Activated CD8-positive, alpha-beta memory T cell treated with anti-CD3 and anti-CD28 coated beads, Interleukin-2, amount 10 ng/mL, durations not matched to agents 7 days and 5 days (primary cell): ENCODE measurements at regions of chr17 and their contacts with region 1.

Region 1: GRCh38 chr17:17641621-17642409 is 39.4 kb upstream of the RAI1 start:
- DNase-seq: peak; percentile 82
- ATAC-seq: peak; percentile 96
- H3K4me3 Mint-ChIP-seq: no peak overlapping the region
- H3K27ac Mint-ChIP-seq: no peak overlapping the region
- H3K4me1 Mint-ChIP-seq: peaks cover 2% of the 10 kb centered on the region
- H3K27me3 Mint-ChIP-seq: peaks cover 6% of the 10 kb centered on the region

Region 2: GRCh38 chr17:17568749-17569195 is 73.0 kb before region 1 on chr17:
- CTCF ChIA-PET with region 1: interaction called, 10 read pairs
- DNase-seq: peak; percentile 74
- ATAC-seq: peak; percentile 73
- H3K4me3 Mint-ChIP-seq: no peak overlapping the region
- H3K27ac Mint-ChIP-seq: no peak overlapping the region
- H3K4me1 Mint-ChIP-seq: no peaks in the 10 kb centered on the region
- H3K27me3 Mint-ChIP-seq: no peaks in the 10 kb centered on the region

Region 3: DNA sequence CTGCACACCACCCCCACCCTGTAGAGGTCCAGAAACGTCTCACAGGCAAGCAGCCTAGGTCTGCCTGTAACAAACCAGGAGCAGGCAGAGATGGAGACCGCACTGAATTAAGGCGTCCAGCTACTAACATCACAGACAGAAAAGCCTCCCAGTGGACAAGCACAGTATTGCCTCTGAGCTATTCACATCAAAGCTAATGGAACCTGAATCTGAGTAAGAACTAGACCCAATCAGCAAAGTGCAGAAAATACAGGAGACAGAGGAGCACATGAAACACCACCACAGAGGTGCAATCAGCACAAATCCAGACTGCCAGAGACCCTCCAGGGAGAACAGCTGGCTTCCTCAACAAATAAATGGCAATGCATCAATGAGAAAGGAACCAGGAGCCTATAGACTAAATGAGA is 28.1 kb before region 1 on chr17:
- CTCF ChIA-PET with region 1: interaction called, 20 read pairs
- DNase-seq: peak; percentile 69
- ATAC-seq: peak; percentile 97
- H3K4me3 Mint-ChIP-seq: no peak overlapping the region
- H3K27ac Mint-ChIP-seq: no peak overlapping the region
- H3K4me1 Mint-ChIP-seq: no peaks in the 10 kb centered on the region
- H3K27me3 Mint-ChIP-seq: peaks cover 7% of the 10 kb centered on the region

Region 4: DNA sequence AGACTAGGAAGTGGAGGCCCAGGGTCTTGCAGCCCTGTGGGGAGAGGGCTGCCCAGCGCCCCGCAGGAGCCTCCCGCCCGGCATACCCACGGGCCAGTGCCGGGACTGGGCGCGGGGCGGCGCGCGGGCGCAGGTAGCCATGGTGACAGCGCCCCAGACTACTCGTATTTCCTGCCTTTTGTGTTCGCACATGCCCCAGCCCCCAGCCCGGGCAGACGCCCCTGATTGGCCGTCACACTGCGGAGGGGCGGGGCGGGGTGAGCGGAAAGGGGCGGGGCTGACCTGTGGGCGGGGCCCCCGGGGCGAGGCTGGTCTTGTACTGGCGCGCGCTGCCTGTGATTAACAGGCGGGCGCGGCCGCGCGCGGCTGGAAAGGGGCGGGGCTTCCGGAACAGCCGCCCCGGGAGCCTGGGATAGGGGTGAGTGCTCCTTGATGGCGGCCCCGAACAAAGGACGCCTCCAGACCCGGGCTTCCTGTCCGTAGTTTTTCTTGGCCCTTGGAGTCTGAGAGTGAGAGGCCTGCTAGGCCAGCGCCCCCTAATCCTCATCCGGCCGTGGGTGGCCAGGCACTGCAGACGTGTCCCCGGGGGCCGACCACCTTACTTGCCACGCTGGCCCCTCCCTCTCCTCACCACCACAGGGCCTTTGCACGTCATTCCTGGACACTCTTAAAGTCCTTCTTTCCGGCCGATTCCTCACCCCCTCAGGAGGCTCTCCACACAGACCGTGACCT is 110.4 kb after region 1 on chr17:
- CTCF ChIA-PET with region 1: no interaction called
- DNase-seq: peak; percentile 97
- ATAC-seq: peak; percentile 87
- H3K4me3 Mint-ChIP-seq: peak overlapping the region; percentile 83
- H3K27ac Mint-ChIP-seq: peak overlapping the region; percentile 93
- H3K4me1 Mint-ChIP-seq: peaks cover 63% of the 10 kb centered on the region
- H3K27me3 Mint-ChIP-seq: no peaks in the 10 kb centered on the region